ENCODE measurements at regions of chr6 and their contacts with region 1.

Region 1: GRCh38 chr6:11496152-11497060 is 41.1 kb upstream of the TMEM170B start:
- DNase-seq: peak; percentile 78
- ATAC-seq: peak; percentile 97
- H3K4me3 Mint-ChIP-seq: no peak overlapping the region
- H3K27ac Mint-ChIP-seq: peak overlapping the region; percentile 32
- H3K4me1 Mint-ChIP-seq: peaks cover 12% of the 10 kb centered on the region
- H3K27me3 Mint-ChIP-seq: no peaks in the 10 kb centered on the region
- CTCF ChIP-seq: peak; percentile 98

Region 2: GRCh38 chr6:10999994-11000393 is 496.4 kb before region 1 on chr6:
- CTCF ChIA-PET with region 1: no interaction called
- POLR2A ChIA-PET with region 1: no interaction called
- intact Hi-C with region 1: no loop called
- DNase-seq: no peak
- ATAC-seq: no peak
- H3K4me3 Mint-ChIP-seq: no peak overlapping the region
- H3K27ac Mint-ChIP-seq: no peak overlapping the region
- H3K4me1 Mint-ChIP-seq: no peaks in the 10 kb centered on the region
- H3K27me3 Mint-ChIP-seq: peaks cover 10% of the 10 kb centered on the region
- CTCF ChIP-seq: no peak

Region 3: GRCh38 chr6:11139056-11139960 is 357.1 kb before region 1 on chr6:
- CTCF ChIA-PET with region 1: interaction called, 86 read pairs
- POLR2A ChIA-PET with region 1: interaction called, 10 read pairs
- intact Hi-C with region 1: loop called (anchors 1 kb)
- DNase-seq: peak; percentile 21
- ATAC-seq: peak; percentile 80
- H3K4me3 Mint-ChIP-seq: no peak overlapping the region
- H3K27ac Mint-ChIP-seq: peak overlapping the region; percentile 9
- H3K4me1 Mint-ChIP-seq: peaks cover 19% of the 10 kb centered on the region
- H3K27me3 Mint-ChIP-seq: no peaks in the 10 kb centered on the region
- CTCF ChIP-seq: no peak

Region 4: DNA sequence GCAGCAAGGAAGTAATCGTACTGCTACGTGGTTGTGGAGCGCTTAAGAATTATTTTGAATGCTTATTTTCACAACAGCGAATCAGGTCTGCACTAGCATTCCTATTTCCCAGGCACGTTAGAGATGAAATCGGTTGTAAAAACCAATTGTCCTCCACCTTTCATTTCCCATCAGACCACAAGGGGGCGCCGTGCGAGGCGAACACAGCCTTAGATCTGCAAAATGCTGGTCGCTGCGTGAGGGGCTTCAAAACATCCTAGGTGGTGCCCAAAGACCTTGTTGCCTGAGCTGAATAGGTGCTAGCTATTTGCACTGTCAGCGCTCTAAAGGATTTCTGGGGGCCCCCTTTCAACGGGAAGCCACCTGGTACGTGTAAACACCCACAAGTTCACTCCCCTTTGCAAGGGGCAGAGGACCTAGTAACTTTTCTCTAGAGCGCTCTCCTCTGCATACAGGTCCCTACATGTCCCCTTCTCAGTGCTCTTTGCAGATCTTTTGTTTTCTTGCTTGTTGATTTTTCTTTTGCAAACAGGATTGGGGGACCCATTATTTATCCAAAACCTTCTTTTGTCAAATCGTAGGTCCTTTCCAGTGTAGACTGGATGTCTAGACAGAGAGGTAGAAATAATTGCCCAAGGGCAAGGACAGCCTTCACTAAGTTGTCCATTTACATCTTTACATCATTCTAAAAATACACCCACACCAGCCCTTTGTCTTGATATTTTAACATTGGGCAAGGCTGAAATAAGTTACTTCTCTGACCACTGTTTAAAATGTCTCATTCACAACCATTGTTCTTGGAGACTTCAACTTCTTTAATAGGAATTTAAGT is 323.7 kb before region 1 on chr6:
- CTCF ChIA-PET with region 1: interaction called, 98 read pairs
- POLR2A ChIA-PET with region 1: interaction called, 4 read pairs
- intact Hi-C with region 1: loop called (anchors 2 kb)
- DNase-seq: peak; percentile 88
- ATAC-seq: peak; percentile 76
- H3K4me3 Mint-ChIP-seq: no peak overlapping the region
- H3K27ac Mint-ChIP-seq: no peak overlapping the region
- H3K4me1 Mint-ChIP-seq: peaks cover 17% of the 10 kb centered on the region
- H3K27me3 Mint-ChIP-seq: no peaks in the 10 kb centered on the region
- CTCF ChIP-seq: peak; percentile 94

Region 5: GRCh38 chr6:11330413-11330760 is 166.0 kb before region 1 on chr6:
- CTCF ChIA-PET with region 1: interaction called, 16 read pairs
- POLR2A ChIA-PET with region 1: no interaction called
- intact Hi-C with region 1: loop called (anchors 5 kb)
- DNase-seq: peak; percentile 35
- ATAC-seq: no peak
- H3K4me3 Mint-ChIP-seq: peak overlapping the region; percentile 7
- H3K27ac Mint-ChIP-seq: peak overlapping the region; percentile 88
- H3K4me1 Mint-ChIP-seq: peaks cover 84% of the 10 kb centered on the region
- H3K27me3 Mint-ChIP-seq: no peaks in the 10 kb centered on the region
- CTCF ChIP-seq: no peak

Region 6: DNA sequence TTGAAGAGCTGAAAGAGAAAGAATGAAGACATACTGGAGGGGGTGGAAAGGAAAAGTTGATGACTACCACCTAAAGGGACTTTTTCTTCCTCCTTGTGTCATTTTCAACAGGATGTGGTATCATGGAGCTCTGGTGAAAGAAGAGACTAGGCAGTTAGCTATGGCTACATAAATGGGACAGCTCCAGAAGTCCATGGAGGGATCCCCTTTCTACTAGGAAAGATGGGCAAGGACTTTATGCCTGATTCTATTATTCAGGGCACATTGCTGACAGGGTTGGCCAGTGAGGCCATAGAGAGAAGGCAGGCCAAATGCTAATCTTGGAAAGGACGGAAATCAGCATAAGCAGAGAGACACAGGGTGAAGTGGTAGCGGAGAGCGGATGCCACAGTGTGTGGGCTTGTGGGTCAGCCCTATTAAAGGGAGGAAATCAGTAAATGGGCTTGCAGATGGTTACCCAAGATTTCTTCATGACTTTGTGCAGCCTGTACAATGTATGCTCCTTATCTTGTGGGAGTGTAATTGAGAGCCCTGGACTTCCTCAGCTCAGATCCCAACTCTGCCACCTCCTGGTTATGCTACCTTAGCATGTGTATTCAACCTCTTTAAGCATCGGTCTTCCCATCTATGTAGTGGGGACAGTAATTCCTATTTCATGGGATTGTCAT is 36.3 kb before region 1 on chr6:
- CTCF ChIA-PET with region 1: interaction called, 20 read pairs
- POLR2A ChIA-PET with region 1: interaction called, 3 read pairs
- intact Hi-C with region 1: no loop called
- DNase-seq: peak; percentile 13
- ATAC-seq: peak; percentile 62
- H3K4me3 Mint-ChIP-seq: peak overlapping the region; percentile 51
- H3K27ac Mint-ChIP-seq: peak overlapping the region; percentile 92
- H3K4me1 Mint-ChIP-seq: peaks cover 35% of the 10 kb centered on the region
- H3K27me3 Mint-ChIP-seq: peaks cover 3% of the 10 kb centered on the region
- CTCF ChIP-seq: no peak

Region 7: DNA sequence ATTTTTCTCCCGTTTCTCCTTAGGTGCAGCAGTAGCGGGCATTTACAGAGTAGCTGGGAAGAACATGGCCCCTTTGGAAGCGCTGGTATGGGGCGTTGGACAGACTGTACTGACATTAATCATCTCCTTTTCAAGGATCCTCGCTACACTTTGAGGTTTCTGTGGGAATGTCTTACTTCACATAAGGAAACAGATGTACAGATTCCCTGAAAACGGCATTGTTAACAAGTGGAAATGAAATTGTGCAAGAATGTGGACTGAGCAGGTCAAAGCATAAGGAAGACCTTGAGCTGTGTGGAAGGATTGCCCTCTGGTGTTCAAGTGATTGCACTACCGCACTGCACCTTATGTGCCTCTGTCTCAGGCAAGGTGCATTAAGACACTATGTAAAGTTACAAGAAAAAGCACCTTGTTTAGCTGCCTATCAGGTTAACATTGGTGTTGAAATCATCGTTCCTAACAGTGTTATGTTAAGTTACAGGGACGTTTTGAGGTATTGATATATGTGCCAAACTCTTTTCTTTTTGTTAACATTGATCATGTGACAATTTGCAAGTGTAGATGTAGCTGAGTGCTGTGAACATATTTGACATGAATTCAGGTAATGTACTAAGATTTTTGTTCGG is 79.1 kb after region 1 on chr6:
- CTCF ChIA-PET with region 1: interaction called, 33 read pairs
- POLR2A ChIA-PET with region 1: no interaction called
- intact Hi-C with region 1: no loop called
- DNase-seq: peak; percentile 69
- ATAC-seq: peak; percentile 99
- H3K4me3 Mint-ChIP-seq: no peak overlapping the region
- H3K27ac Mint-ChIP-seq: no peak overlapping the region
- H3K4me1 Mint-ChIP-seq: no peaks in the 10 kb centered on the region
- H3K27me3 Mint-ChIP-seq: no peaks in the 10 kb centered on the region
- CTCF ChIP-seq: peak; percentile 88

Region 8: GRCh38 chr6:11938285-11938890 is 442.0 kb after region 1 on chr6:
- CTCF ChIA-PET with region 1: no interaction called
- POLR2A ChIA-PET with region 1: no interaction called
- intact Hi-C with region 1: no loop called
- DNase-seq: no peak
- ATAC-seq: no peak
- H3K4me3 Mint-ChIP-seq: no peak overlapping the region
- H3K27ac Mint-ChIP-seq: no peak overlapping the region
- H3K4me1 Mint-ChIP-seq: peaks cover 4% of the 10 kb centered on the region
- H3K27me3 Mint-ChIP-seq: no peaks in the 10 kb centered on the region
- CTCF ChIP-seq: no peak